Activated CD4-positive, alpha-beta memory T cell treated with anti-CD3 and anti-CD28 coated beads for 36 hours (primary cell): ENCODE measurements at regions of chr1 and their contacts with region 1.

Region 1: DNA sequence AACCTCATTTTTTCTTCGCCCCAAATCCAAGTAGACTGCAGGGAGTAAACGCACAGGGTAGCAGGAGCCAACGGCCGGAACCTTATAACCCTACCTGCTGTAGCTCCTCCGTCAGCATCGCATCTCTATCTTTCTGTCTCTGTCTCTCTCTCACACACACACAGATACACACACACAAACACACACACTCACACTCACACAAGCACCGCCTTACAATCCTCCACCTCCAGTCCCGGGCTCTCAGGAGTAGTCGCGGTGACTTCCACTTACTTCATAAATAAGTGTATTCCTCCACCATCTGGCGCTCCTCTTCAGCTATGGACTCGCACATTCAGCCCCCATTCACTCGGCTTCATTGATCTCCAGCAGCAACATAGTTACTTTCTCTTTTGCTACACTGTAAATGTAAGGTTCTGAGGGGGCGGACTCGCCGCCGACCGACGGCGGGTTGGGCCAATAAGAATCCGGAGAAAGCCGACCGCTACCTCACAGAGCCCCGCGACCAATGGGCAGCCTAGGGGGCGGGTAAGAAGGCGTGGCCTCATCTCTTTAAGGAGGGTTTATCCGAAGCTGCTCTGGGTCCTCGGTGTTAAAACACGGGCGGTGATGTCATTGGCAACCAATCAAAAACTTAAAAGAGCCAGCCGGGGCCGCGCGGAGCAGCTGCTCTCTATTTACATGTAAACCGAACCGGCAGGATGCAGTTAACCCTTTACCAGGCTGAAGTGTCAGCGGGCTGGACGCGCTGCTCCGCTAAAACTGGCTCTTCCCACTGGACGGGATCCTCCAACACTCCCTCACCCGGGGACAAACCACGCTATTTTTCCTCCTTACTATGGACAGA is at the start of gene DUSP10:
- DNase-seq: peak; percentile 99
- H3K4me3 Mint-ChIP-seq: no peak within 1 kb of the TSS
- H3K27ac Mint-ChIP-seq: peak within 1 kb of the TSS; percentile 64
- H3K4me1 Mint-ChIP-seq: peaks cover 37% of the 10 kb centered on the region
- H3K27me3 Mint-ChIP-seq: no peaks in the 10 kb centered on the region
- total RNA-seq, gene DUSP10: 8.8 to 8.9 TPM

Region 2: DNA sequence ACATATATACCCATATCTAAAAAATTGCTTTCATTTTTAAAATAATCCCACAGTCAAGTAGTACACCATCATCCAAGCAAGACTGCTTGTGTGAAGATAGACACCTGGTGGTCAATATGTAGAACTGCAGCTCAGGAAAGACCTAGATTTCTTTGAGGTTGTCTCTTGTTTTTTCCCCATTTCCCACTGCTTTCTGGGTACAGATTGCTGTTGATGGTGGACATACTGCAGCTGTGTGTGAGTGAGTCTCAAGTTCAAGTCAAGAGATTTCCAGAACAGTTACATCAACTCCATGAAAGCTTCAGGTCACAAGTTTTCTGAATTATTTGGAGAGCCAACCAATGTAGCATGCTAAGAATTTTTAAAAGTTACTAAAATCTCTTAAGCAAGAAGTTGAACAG is 306.4 kb before region 1 on chr1:
- CTCF ChIA-PET with region 1: no interaction called
- POLR2A ChIA-PET with region 1: no interaction called
- intact Hi-C with region 1: loop called (anchors 1 kb)
- DNase-seq: no peak
- H3K4me3 Mint-ChIP-seq: no peak overlapping the region
- H3K27ac Mint-ChIP-seq: no peak overlapping the region
- H3K4me1 Mint-ChIP-seq: peaks cover 30% of the 10 kb centered on the region
- H3K27me3 Mint-ChIP-seq: peaks cover 6% of the 10 kb centered on the region

Region 3: GRCh38 chr1:221602866-221603265 is 139.1 kb before region 1 on chr1:
- CTCF ChIA-PET with region 1: no interaction called
- POLR2A ChIA-PET with region 1: no interaction called
- intact Hi-C with region 1: no loop called
- DNase-seq: no peak
- H3K4me3 Mint-ChIP-seq: no peak overlapping the region
- H3K27ac Mint-ChIP-seq: no peak overlapping the region
- H3K4me1 Mint-ChIP-seq: no peaks in the 10 kb centered on the region
- H3K27me3 Mint-ChIP-seq: peaks cover 1% of the 10 kb centered on the region

Region 4: GRCh38 chr1:221708987-221709386 is 32.9 kb before region 1 on chr1:
- CTCF ChIA-PET with region 1: interaction called, 22 read pairs
- POLR2A ChIA-PET with region 1: interaction called, 49 read pairs
- intact Hi-C with region 1: loop called (anchors 1 kb)
- DNase-seq: peak; percentile 63
- H3K4me3 Mint-ChIP-seq: peak overlapping the region; percentile 26
- H3K27ac Mint-ChIP-seq: peak overlapping the region; percentile 86
- H3K4me1 Mint-ChIP-seq: peaks cover 60% of the 10 kb centered on the region
- H3K27me3 Mint-ChIP-seq: no peaks in the 10 kb centered on the region

Region 5: DNA sequence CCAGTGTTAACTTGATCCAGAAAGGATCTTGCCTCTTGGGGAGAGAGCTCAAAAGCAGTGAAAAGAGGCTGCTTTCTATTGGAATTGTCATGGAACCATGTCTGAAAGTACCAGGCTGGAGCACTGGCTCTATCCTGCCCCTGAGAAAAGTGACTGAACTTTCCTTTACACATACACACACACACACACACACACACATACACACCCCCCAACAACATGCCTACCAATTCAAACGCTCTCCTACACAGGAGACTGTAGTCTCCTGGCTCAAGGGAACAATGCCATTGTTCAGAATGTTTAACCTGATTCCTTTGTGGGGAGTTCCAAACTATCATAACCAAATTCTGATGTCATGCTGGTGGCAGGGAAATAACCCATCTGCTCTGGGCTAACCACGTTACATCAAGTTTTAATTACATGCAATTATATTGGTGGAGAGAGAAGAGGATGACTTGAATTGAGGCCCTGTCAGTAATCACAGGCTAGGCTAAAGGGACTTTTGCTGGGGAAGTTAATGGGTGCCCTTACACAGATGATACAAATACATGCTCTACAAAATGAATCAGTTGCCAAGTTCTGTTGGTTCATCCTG is 52.2 kb after region 1 on chr1:
- CTCF ChIA-PET with region 1: interaction called, 3 read pairs
- POLR2A ChIA-PET with region 1: interaction called, 14 read pairs
- intact Hi-C with region 1: loop called (anchors 1 kb)
- DNase-seq: peak; percentile 56
- H3K4me3 Mint-ChIP-seq: no peak overlapping the region
- H3K27ac Mint-ChIP-seq: peak overlapping the region; percentile 84
- H3K4me1 Mint-ChIP-seq: peaks cover 41% of the 10 kb centered on the region
- H3K27me3 Mint-ChIP-seq: no peaks in the 10 kb centered on the region

Region 6: DNA sequence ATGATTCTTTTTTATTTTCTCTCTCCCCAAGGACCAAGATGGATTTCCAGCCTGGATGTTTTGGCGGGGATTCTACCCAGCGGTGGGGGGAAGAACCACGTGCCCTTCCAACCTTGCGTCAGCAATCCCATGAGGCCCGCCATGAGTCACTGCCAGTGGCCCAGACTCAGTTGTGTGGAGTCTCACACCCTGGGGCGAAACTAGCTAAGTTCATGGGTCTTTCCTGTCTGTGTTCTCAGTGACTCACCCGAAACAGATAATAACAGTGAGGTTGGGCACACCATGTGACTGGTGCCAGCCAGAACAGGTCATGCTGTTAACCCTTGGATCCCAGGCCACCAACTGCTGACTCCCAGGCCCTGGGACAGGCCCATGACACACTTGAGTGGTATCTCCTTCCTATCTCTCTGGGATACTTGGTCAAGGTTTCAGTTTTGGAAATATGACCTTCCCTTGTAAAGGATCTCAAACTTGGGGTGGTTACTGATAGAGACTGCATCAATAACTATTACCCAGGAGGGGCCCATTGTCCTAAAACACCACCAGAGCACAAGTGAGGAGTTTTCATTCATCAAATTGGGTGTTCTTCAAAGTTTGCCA is 98.0 kb after region 1 on chr1:
- CTCF ChIA-PET with region 1: no interaction called
- POLR2A ChIA-PET with region 1: interaction called, 12 read pairs
- intact Hi-C with region 1: loop called (anchors 1 kb)
- DNase-seq: peak; percentile 88
- H3K4me3 Mint-ChIP-seq: no peak overlapping the region
- H3K27ac Mint-ChIP-seq: peak overlapping the region; percentile 74
- H3K4me1 Mint-ChIP-seq: peaks cover 38% of the 10 kb centered on the region
- H3K27me3 Mint-ChIP-seq: peaks cover 6% of the 10 kb centered on the region

Region 7: GRCh38 chr1:221945669-221946068 is 203.7 kb after region 1 on chr1:
- CTCF ChIA-PET with region 1: no interaction called
- POLR2A ChIA-PET with region 1: no interaction called
- intact Hi-C with region 1: no loop called
- DNase-seq: no peak
- H3K4me3 Mint-ChIP-seq: no peak overlapping the region
- H3K27ac Mint-ChIP-seq: no peak overlapping the region
- H3K4me1 Mint-ChIP-seq: no peaks in the 10 kb centered on the region
- H3K27me3 Mint-ChIP-seq: no peaks in the 10 kb centered on the region

Region 8: GRCh38 chr1:222455188-222455879 is 713.4 kb after region 1 on chr1:
- CTCF ChIA-PET with region 1: no interaction called
- POLR2A ChIA-PET with region 1: no interaction called
- intact Hi-C with region 1: loop called (anchors 5 kb)
- DNase-seq: peak; percentile 88
- H3K4me3 Mint-ChIP-seq: no peak overlapping the region
- H3K27ac Mint-ChIP-seq: no peak overlapping the region
- H3K4me1 Mint-ChIP-seq: peaks cover 14% of the 10 kb centered on the region
- H3K27me3 Mint-ChIP-seq: no peaks in the 10 kb centered on the region